ENCODE measurements at regions of chr12 and their contacts with region 1.

Region 1: DNA sequence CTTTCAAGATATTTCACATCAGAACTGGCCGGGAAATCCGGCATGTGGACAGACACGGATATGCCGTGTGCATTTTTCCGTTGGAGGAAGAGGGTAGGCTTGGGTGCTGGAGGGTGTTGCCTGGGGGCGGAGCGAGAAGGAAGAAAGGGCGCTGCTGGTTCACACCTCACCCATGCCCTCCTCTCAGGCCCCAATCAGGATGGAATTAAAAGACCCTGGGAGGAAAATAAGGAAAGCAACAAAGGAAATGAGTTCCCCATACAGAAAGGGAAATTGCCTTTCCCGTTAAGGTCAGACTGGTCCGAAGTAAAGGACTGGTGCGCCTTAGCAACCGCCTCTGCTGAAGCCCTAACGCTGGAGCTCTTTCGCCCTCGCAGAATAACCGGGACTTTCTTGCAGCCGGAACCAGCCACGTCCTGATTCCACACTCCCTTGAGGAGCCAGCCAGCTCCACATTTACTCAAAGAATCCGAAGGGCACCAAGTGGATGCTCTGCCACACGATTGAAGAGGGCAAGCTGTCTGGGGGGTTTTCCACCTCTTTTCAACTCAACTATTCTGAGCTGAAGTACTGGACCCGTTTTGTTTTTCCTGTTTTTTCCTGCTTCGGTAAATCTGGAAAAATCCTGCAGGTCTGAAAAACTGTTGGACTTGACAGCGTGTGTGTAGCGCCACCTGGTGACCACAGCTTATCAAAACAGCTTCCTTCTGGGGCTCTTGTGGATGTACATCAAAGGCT is 37.7 kb upstream of the BCL2L14 start:
- DNase-seq: peak; percentile 44 to 85 (median 74)
- ATAC-seq: peak; percentile 76
- H3K4me3 ChIP-seq: peak overlapping the region; percentile 51 to 54
- H3K4me3 Mint-ChIP-seq: peak overlapping the region; percentile 75
- H3K27ac ChIP-seq: no peak overlapping the region
- H3K27ac Mint-ChIP-seq: peak overlapping the region; percentile 67
- H3K4me1 ChIP-seq: peaks cover 7% of the 10 kb centered on the region
- H3K4me1 Mint-ChIP-seq: peaks cover 18% of the 10 kb centered on the region
- H3K27me3 ChIP-seq: no peaks in the 10 kb centered on the region
- H3K27me3 Mint-ChIP-seq: no peaks in the 10 kb centered on the region
- CTCF ChIP-seq: peak; percentile 92

Region 2: GRCh38 chr12:11553871-11554533 is 479.0 kb before region 1 on chr12:
- CTCF ChIA-PET with region 1: interaction called, 13 read pairs
- POLR2A ChIA-PET with region 1: no interaction called
- intact Hi-C with region 1: loop called (anchors 1 kb)
- DNase-seq: peak in 6 of 9 experiments; percentile 10 to 79 (median 44)
- ATAC-seq: peak; percentile 50
- H3K4me3 ChIP-seq: no peak overlapping the region
- H3K4me3 Mint-ChIP-seq: no peak overlapping the region
- H3K27ac ChIP-seq: no peak overlapping the region
- H3K27ac Mint-ChIP-seq: no peak overlapping the region
- H3K4me1 ChIP-seq: peaks cover 16% of the 10 kb centered on the region
- H3K4me1 Mint-ChIP-seq: peaks cover 24% of the 10 kb centered on the region
- H3K27me3 ChIP-seq: no peaks in the 10 kb centered on the region
- H3K27me3 Mint-ChIP-seq: no peaks in the 10 kb centered on the region
- CTCF ChIP-seq: peak; percentile 51

Region 3: GRCh38 chr12:11615481-11615880 is 417.5 kb before region 1 on chr12:
- CTCF ChIA-PET with region 1: interaction called, 17 read pairs
- POLR2A ChIA-PET with region 1: no interaction called
- intact Hi-C with region 1: no loop called
- DNase-seq: no peak
- ATAC-seq: no peak
- H3K4me3 ChIP-seq: no peak overlapping the region
- H3K4me3 Mint-ChIP-seq: no peak overlapping the region
- H3K27ac ChIP-seq: no peak overlapping the region
- H3K27ac Mint-ChIP-seq: no peak overlapping the region
- H3K4me1 ChIP-seq: no peaks in the 10 kb centered on the region
- H3K4me1 Mint-ChIP-seq: no peaks in the 10 kb centered on the region
- H3K27me3 ChIP-seq: no peaks in the 10 kb centered on the region
- H3K27me3 Mint-ChIP-seq: no peaks in the 10 kb centered on the region
- CTCF ChIP-seq: no peak

Region 4: GRCh38 chr12:11805043-11805442 is 228.0 kb before region 1 on chr12:
- CTCF ChIA-PET with region 1: interaction called, 10 read pairs
- POLR2A ChIA-PET with region 1: no interaction called
- intact Hi-C with region 1: no loop called
- DNase-seq: no peak
- ATAC-seq: no peak
- H3K4me3 ChIP-seq: no peak overlapping the region
- H3K4me3 Mint-ChIP-seq: no peak overlapping the region
- H3K27ac ChIP-seq: no peak overlapping the region
- H3K27ac Mint-ChIP-seq: no peak overlapping the region
- H3K4me1 ChIP-seq: no peaks in the 10 kb centered on the region
- H3K4me1 Mint-ChIP-seq: peaks cover 25% of the 10 kb centered on the region
- H3K27me3 ChIP-seq: no peaks in the 10 kb centered on the region
- H3K27me3 Mint-ChIP-seq: no peaks in the 10 kb centered on the region
- CTCF ChIP-seq: no peak

Region 5: DNA sequence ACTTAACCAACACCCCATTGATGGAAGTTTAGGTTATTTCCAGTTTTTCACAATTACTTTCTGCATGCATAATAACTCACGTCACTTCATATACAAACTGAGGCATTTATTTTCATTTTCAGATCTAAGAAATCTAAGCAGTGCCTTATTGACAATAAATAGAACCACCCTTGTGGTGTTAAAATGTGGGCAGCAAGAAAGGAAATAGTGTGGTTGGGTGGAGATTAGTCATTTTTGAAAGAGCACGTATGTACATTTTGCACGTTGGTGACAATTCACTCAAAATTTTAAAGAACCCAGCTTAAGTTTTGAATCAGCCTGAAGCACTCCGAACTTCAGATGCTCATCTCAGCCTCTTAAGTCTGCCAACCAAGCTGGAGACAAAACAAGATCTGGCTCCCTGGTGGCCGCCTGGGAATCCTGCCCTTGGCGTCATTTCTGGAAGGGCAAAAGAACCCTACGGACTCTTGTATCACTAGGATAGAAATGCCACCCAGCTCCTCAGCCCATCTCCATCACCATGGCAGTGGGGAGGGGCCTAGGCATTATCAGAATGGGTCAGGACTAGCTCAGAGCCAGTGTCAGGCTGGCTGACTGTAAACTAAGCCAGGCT is 51.8 kb before region 1 on chr12:
- CTCF ChIA-PET with region 1: interaction called, 18 read pairs
- POLR2A ChIA-PET with region 1: no interaction called
- intact Hi-C with region 1: loop called in 1 of 2 experiments (anchors 2 kb)
- DNase-seq: peak in 8 of 9 experiments; percentile 9 to 92 (median 36)
- ATAC-seq: peak; percentile 86
- H3K4me3 ChIP-seq: peak overlapping the region in 1 of 2 experiments; percentile 13
- H3K4me3 Mint-ChIP-seq: peak overlapping the region; percentile 0
- H3K27ac ChIP-seq: peak overlapping the region in 1 of 2 experiments; percentile 69
- H3K27ac Mint-ChIP-seq: peak overlapping the region; percentile 86
- H3K4me1 ChIP-seq: peaks cover 24% of the 10 kb centered on the region
- H3K4me1 Mint-ChIP-seq: peaks cover 30% of the 10 kb centered on the region
- H3K27me3 ChIP-seq: no peaks in the 10 kb centered on the region
- H3K27me3 Mint-ChIP-seq: no peaks in the 10 kb centered on the region
- CTCF ChIP-seq: no peak

Region 6: GRCh38 chr12:12022306-12022936 is 10.6 kb before region 1 on chr12:
- CTCF ChIA-PET with region 1: interaction called, 12 read pairs
- POLR2A ChIA-PET with region 1: interaction called, 3 read pairs
- intact Hi-C with region 1: no loop called
- DNase-seq: no peak
- ATAC-seq: no peak
- H3K4me3 ChIP-seq: no peak overlapping the region
- H3K4me3 Mint-ChIP-seq: no peak overlapping the region
- H3K27ac ChIP-seq: no peak overlapping the region
- H3K27ac Mint-ChIP-seq: no peak overlapping the region
- H3K4me1 ChIP-seq: peaks cover 4% of the 10 kb centered on the region
- H3K4me1 Mint-ChIP-seq: peaks cover 7% of the 10 kb centered on the region
- H3K27me3 ChIP-seq: no peaks in the 10 kb centered on the region
- H3K27me3 Mint-ChIP-seq: no peaks in the 10 kb centered on the region
- CTCF ChIP-seq: no peak